Ascending aorta (tissue), 2 donors: ENCODE measurements at regions of chr20 and their contacts with region 1.

Region 1: GRCh38 chr20:17968366-17969279 is at the starts of genes MGME1 and SNX5:
- DNase-seq: peak; percentile 99 to 100
- H3K4me3 ChIP-seq: peak within 1 kb of the TSS; percentile 79 to 84
- H3K27ac ChIP-seq: peak within 1 kb of the TSS; percentile 94 to 96
- H3K4me1 ChIP-seq: peaks cover 4 to 31% of the 10 kb centered on the region in 2 donors
- H3K27me3 ChIP-seq: no peaks in the 10 kb centered on the region
- CTCF ChIP-seq: no peak
- total RNA-seq, gene MGME1: 0.85 TPM
- total RNA-seq, gene SNX5: 32.7 TPM

Region 2: DNA sequence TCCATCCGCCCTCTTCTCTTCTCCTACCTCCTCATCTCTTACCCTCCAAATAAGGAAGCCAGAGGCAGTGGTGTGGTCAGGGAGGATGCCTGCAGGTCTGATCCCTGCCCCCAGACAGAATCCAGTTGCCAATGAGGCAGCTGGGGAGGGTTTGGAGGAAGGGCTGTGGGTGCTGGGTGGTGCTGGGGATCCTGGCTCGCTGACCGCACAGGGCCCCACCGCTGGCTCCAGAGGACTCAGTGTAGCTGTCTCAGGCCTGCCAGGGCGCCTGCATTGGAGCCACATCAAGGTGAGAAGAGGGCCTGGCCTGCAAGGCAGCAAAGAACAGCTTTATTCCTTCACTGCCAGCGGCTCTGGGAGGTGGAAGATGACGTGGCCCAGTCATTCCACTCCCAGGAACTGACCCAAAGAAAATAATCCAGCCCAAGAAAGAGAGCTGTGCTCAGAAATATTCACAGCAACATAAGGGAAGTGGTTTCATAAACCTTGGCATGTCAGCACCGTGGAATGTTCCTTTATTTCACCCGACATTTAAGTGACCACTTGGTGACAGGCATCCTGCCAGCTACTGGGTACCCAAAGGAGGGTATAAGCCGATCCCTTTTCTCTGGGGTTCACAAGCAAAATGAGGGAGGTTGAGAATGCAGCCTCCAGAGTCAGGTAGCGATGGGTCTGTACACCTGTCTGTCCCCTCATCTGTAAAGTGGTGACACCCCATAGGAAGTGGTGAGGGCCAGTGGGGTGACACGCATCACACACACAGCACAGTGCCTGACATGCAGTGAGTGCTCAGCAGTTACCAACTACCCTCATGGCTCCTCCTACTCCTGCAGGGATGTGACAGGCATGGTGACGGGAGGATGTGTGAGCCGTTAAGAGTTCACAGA is 125.1 kb before region 1 on chr20:
- intact Hi-C with region 1: loop called (anchors 2 kb)
- DNase-seq: peak; percentile 27 to 93
- H3K4me3 ChIP-seq: no peak overlapping the region
- H3K27ac ChIP-seq: peak overlapping the region; percentile 85 to 88
- H3K4me1 ChIP-seq: peaks cover 15 to 29% of the 10 kb centered on the region in 2 donors
- H3K27me3 ChIP-seq: no peaks in the 10 kb centered on the region
- CTCF ChIP-seq: no peak

Region 3: GRCh38 chr20:17938871-17939619 is 29.6 kb before region 1 on chr20:
- intact Hi-C with region 1: loop called (anchors 2 kb)
- DNase-seq: peak; percentile 18 to 79
- H3K4me3 ChIP-seq: no peak overlapping the region
- H3K27ac ChIP-seq: peak overlapping the region; percentile 33 to 73
- H3K4me1 ChIP-seq: peaks cover 10 to 30% of the 10 kb centered on the region in 2 donors
- H3K27me3 ChIP-seq: no peaks in the 10 kb centered on the region
- CTCF ChIP-seq: peak; percentile 85 to 92 (median 90)

Region 4: DNA sequence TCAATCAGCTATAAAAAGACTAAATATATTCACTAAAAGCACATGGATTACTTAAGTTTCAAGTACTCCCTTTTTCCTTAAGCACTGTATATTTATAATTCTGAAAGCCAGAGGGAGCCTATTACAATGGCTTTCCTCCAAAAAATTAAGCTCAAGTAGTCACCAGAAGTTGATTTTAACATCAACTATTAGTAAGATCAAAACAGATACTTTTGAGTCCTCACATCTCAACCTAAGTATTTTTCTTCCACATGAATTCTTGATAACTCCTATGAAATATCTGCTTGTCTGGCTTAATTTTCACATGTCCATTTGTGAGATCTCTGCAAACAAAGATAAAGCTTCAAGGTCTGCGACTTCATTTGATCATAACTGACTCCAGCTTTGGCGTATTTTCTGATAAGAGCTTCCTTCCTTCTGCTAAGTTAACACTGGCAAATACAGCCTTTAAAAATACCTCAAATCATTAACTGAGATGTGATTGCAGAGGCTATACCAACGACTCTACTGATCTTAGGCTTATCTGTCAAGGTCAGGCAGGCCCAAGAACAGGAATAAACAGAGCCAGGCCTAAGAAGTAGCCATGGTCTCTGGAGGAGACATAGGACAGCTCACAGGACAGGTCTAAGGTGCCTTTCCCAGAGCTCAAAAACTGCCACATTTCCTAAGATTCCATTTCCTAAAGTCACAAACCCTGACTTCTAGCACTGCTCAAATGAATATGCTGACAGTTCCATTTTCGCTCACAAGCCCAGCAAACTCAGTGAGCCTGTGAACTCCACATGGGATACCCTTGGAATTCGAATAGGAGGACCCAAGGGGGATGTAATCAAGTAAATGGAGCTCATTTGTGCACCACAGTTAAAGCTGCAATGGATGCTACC is 10.0 kb before region 1 on chr20:
- intact Hi-C with region 1: no loop called
- DNase-seq: no peak
- H3K4me3 ChIP-seq: no peak overlapping the region
- H3K27ac ChIP-seq: peak overlapping the region; percentile 33 to 60
- H3K4me1 ChIP-seq: peaks cover 3 to 34% of the 10 kb centered on the region in 2 donors
- H3K27me3 ChIP-seq: no peaks in the 10 kb centered on the region
- CTCF ChIP-seq: peak in 1 of 3 experiments; percentile 35

Region 5: GRCh38 chr20:18137412-18138265 is 169.0 kb after region 1 on chr20 and contains the starts of genes KAT14 and PET117:
- intact Hi-C with region 1: loop called (anchors 2 kb)
- DNase-seq: peak; percentile 36 to 92
- H3K4me3 ChIP-seq: peak within 1 kb of the TSS; percentile 76 to 81
- H3K27ac ChIP-seq: peak within 1 kb of the TSS; percentile 88
- H3K4me1 ChIP-seq: peaks cover 3 to 18% of the 10 kb centered on the region in 2 donors
- H3K27me3 ChIP-seq: no peaks in the 10 kb centered on the region
- CTCF ChIP-seq: no peak
- total RNA-seq, gene KAT14: 1.7 TPM
- total RNA-seq, gene PET117: 37.1 TPM